MCF 10A (cell line): ENCODE measurements at regions of chr3 and their contacts with region 1.

Region 1: DNA sequence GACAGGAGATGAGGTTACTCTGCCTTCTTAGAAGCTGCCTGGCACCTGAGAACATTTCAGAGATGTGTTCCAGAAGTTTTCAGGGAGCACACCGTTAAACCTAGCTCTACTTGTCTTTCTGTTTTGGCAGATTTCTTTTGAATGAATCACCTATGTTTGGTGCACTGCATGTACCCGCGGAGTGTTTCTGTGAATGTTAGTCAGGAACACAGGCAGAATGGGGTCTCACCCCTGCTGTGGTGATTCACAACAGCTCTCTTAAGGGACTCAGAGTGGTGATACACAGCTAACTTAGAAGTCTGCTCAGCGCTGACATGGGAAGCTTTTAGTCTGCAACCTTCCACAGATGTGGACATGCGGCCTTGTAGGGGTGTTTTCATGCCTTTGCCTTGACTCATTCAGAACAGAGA is 24.0 kb downstream of the TSEN2 start:
- DNase-seq: peak; percentile 91
- H3K4me3 Mint-ChIP-seq: peak overlapping the region; percentile 69
- H3K27ac Mint-ChIP-seq: peak overlapping the region; percentile 93
- H3K4me1 Mint-ChIP-seq: peaks cover 23% of the 10 kb centered on the region
- H3K27me3 Mint-ChIP-seq: no peaks in the 10 kb centered on the region
- CTCF ChIP-seq: no peak

Region 2: GRCh38 chr3:12518261-12519028 is 10.1 kb after region 1 on chr3:
- CTCF ChIA-PET with region 1: interaction called, 4 read pairs
- POLR2A ChIA-PET with region 1: interaction called, 14 read pairs
- intact Hi-C with region 1: no loop called
- DNase-seq: no peak
- H3K4me3 Mint-ChIP-seq: no peak overlapping the region
- H3K27ac Mint-ChIP-seq: peak overlapping the region; percentile 39
- H3K4me1 Mint-ChIP-seq: no peaks in the 10 kb centered on the region
- H3K27me3 Mint-ChIP-seq: no peaks in the 10 kb centered on the region
- CTCF ChIP-seq: no peak

Region 3: DNA sequence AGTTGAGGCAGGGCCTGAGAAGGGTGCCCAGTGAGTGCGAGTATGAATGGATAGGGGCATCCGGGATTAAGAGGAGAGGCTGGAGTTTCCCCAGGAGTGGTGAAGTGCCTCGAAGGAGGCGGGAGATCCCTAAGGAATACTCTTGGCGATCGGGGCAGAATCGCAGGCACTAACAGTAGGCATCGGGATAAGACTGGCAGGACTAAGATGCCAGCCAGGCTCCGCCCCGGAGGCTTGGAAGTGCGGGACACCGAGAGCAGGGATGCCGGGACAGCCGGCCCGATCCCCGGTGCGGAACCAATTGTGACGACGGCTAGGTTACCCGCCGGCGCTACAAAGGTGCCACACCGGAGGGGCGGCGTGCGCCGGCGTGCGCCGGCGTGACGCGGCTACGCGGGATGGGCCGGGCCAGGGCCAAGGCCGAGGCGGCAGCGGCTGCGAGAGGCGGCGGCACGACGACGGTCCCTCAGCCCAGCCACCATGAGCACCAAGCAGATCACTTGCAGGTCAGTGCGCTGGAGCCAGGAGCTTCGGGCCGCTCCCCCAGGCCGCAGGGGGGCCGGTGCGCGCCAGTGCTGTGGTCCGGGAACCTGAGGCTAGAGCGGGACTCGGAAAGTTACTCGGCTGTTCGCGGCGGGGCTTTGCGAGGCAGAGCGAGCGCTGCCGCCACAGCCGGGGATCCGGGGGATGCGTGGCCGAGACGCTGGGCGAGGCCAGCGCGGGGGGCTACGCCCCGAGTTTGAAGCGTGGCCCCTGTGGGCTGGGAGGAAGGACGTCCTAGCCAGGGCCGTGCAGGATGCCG is 48.6 kb after region 1 on chr3 and contains the start of gene MKRN2:
- CTCF ChIA-PET with region 1: interaction called, 3 read pairs
- POLR2A ChIA-PET with region 1: interaction called, 29 read pairs
- intact Hi-C with region 1: loop called (anchors 5 kb)
- DNase-seq: peak; percentile 89
- H3K4me3 Mint-ChIP-seq: peak within 1 kb of the TSS; percentile 73
- H3K27ac Mint-ChIP-seq: peak within 1 kb of the TSS; percentile 65
- H3K4me1 Mint-ChIP-seq: peaks cover 35% of the 10 kb centered on the region
- H3K27me3 Mint-ChIP-seq: no peaks in the 10 kb centered on the region
- CTCF ChIP-seq: no peak
- total RNA-seq, gene MKRN2: 22.0 and 25.6 TPM in 2 replicates